ENCODE measurements at regions of chr11 and their contacts with region 1.

Region 1: DNA sequence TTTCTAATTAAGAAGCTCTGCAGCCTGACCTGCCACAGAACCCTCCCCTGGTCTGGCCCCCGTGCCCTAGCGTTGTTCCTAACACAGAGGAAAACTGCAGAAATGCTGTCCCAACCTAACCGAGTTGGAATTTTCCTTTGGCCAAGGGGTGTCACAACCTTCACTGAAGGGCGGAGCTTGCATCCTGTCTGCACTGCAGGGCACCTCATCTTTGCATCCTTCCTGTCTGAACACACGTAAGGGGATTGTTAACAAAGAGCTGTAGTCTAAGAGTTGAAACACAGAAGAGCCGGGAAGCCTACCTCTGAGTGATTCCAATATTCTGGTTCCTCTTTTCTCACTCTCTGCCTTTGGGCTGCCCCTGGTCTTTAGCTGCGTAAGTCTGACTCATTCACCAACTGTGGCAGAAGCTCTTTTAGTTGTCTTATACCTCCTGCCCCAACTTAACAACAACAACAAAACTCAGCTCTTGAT is 1.6 kb downstream of the DIXDC1 start:
- DNase-seq: no peak
- ATAC-seq: peak in 2 of 4 donors; percentile 3 to 8
- H3K4me3 ChIP-seq: peak overlapping the region in 6 of 12 donors; percentile 3 to 85 (median 67)
- H3K27ac ChIP-seq: peak overlapping the region in 10 of 12 donors; percentile 45 to 86 (median 71)
- H3K4me1 ChIP-seq: peaks cover 0 to 65% (median 36%) of the 10 kb centered on the region in 12 donors
- H3K27me3 ChIP-seq: no peaks in the 10 kb centered on the region
- CTCF ChIP-seq: no peak
- POLR2A ChIP-seq: no peak

Region 2: GRCh38 chr11:111561791-111562325 is 376.9 kb before region 1 on chr11:
- intact Hi-C with region 1: no loop called
- DNase-seq: no peak
- ATAC-seq: no peak
- H3K4me3 ChIP-seq: no peak overlapping the region
- H3K27ac ChIP-seq: no peak overlapping the region
- H3K4me1 ChIP-seq: peaks cover 0 to 15% (median 0%) of the 10 kb centered on the region in 12 donors
- H3K27me3 ChIP-seq: no peaks in the 10 kb centered on the region
- CTCF ChIP-seq: no peak
- POLR2A ChIP-seq: no peak

Region 3: GRCh38 chr11:111777094-111778046 is 161.4 kb before region 1 on chr11:
- intact Hi-C with region 1: no loop called
- DNase-seq: peak in 1 of 5 donors; percentile 37
- ATAC-seq: peak; percentile 72 to 82 (median 79)
- H3K4me3 ChIP-seq: no peak overlapping the region
- H3K27ac ChIP-seq: peak overlapping the region in 1 of 12 donors; percentile 11
- H3K4me1 ChIP-seq: peaks cover 0 to 17% (median 12%) of the 10 kb centered on the region in 12 donors
- H3K27me3 ChIP-seq: no peaks in the 10 kb centered on the region
- CTCF ChIP-seq: peak; percentile 60 to 87 (median 84)
- POLR2A ChIP-seq: no peak

Region 4: DNA sequence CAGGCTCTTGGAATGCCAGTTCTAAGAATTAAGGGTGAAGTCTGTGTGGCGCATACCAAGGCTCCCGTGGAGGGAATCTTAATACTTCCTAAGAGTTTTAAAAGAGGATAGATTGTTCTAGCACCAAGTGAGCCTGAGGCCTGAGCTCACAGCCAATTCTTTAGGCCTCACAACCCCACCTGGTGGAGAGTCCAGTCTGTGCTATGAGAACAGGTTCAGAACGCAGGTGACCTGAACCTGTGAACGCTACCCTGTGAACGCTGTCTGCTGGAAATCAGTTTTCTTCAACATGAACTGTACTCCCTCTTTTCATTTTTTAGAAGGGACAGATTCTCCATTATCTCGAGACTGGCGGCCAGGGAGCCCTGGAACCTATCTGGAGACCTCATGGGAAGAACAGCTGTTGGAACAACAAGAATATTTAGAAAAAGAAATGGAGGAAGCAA is 43.3 kb after region 1 on chr11:
- intact Hi-C with region 1: loop called (anchors 2 to 5 kb)
- DNase-seq: peak in 4 of 5 donors; percentile 39 to 70 (median 52)
- ATAC-seq: peak; percentile 48 to 61 (median 53)
- H3K4me3 ChIP-seq: peak overlapping the region in 1 of 12 donors; percentile 18
- H3K27ac ChIP-seq: peak overlapping the region in 11 of 12 donors; percentile 8 to 92 (median 55)
- H3K4me1 ChIP-seq: peaks cover 0 to 57% (median 24%) of the 10 kb centered on the region in 12 donors
- H3K27me3 ChIP-seq: peaks cover 0 to 20% (median 0%) of the 10 kb centered on the region in 9 donors
- CTCF ChIP-seq: peak; percentile 30 to 67 (median 54)
- POLR2A ChIP-seq: no peak

Region 5: GRCh38 chr11:111992206-111992855 is 53.6 kb after region 1 on chr11:
- intact Hi-C with region 1: loop called in 4 of 10 experiments (anchors 5 kb)
- DNase-seq: no peak
- ATAC-seq: peak; percentile 43 to 75 (median 62)
- H3K4me3 ChIP-seq: no peak overlapping the region
- H3K27ac ChIP-seq: peak overlapping the region in 11 of 12 donors; percentile 16 to 77 (median 62)
- H3K4me1 ChIP-seq: peaks cover 0 to 51% (median 8%) of the 10 kb centered on the region in 12 donors
- H3K27me3 ChIP-seq: no peaks in the 10 kb centered on the region
- CTCF ChIP-seq: no peak
- POLR2A ChIP-seq: no peak

Region 6: GRCh38 chr11:112074026-112074811 is 135.5 kb after region 1 on chr11 and contains the start of gene NKAPD1:
- intact Hi-C with region 1: loop called in 2 of 10 experiments (anchors 5 to 10 kb)
- DNase-seq: peak; percentile 73 to 79 (median 76)
- ATAC-seq: peak; percentile 83 to 94 (median 94)
- H3K4me3 ChIP-seq: peak within 1 kb of the TSS; percentile 46 to 96 (median 80)
- H3K27ac ChIP-seq: peak within 1 kb of the TSS; percentile 82 to 95 (median 88)
- H3K4me1 ChIP-seq: peaks cover 0 to 25% (median 17%) of the 10 kb centered on the region in 12 donors
- H3K27me3 ChIP-seq: no peaks in the 10 kb centered on the region
- CTCF ChIP-seq: peak in 1 of 12 donors; percentile 13
- POLR2A ChIP-seq: peak in 1 of 2 donors; percentile 36
- total RNA-seq, gene NKAPD1: 5.1 to 12.5 (median 7.6) TPM

Region 7: DNA sequence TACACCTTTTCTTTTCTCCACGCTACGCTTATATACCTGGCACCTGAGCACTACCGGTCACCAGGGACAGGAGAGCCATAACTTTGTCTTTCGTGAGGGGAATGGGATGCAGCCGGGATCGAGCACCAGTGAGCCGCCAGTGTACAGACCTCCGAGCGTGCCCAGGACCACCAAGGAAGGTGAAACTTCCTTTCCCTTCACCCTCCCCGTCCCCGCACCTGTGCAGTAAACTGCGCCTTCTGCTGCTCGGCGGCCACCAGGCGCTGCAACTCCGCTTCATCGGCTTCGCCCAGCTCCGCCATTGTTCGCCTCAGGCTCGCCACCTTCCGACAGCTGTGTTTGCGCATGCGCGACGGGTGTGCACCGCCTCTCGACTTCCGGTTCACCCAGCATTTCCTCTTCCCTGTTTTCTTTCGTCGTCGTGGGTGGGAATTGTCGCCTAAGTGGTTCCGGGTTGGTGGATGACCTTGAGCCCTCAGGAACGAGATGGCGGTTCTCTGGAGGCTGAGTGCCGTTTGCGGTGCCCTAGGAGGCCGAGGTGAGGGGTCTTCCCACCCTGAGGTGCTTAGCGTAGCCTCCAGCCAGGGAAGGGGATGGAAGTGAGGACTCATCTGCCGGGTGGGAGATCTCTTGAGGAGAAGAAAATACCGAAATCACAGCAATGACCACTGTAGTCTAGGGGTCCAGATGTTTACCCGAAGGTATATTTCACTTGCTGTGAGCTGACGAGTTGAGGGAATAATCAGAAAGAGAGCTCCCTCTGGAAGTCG is 147.9 kb after region 1 on chr11 and contains the starts of genes SDHD and TIMM8B:
- intact Hi-C with region 1: loop called in 1 of 10 experiments (anchors 10 kb)
- DNase-seq: peak; percentile 96 to 97 (median 96)
- ATAC-seq: peak; percentile 93 to 97 (median 94)
- H3K4me3 ChIP-seq: peak within 1 kb of the TSS; percentile 74 to 96 (median 90)
- H3K27ac ChIP-seq: peak within 1 kb of the TSS; percentile 55 to 95 (median 88)
- H3K4me1 ChIP-seq: peaks cover 3 to 50% (median 38%) of the 10 kb centered on the region in 12 donors
- H3K27me3 ChIP-seq: no peaks in the 10 kb centered on the region
- CTCF ChIP-seq: peak in 8 of 12 donors; percentile 6 to 39 (median 22)
- POLR2A ChIP-seq: peak in 1 of 2 donors; percentile 65
- total RNA-seq, gene SDHD: 173 to 314 (median 245) TPM
- total RNA-seq, gene TIMM8B: 113 to 203 (median 148) TPM

Measured in heart left ventricle (tissue), 16 donors.